ENCODE measurements at regions of chr15 and their contacts with region 1.

Region 1: GRCh38 chr15:31365655-31366127 is 39.1 kb downstream of the KLF13 start:
- DNase-seq: peak; percentile 78
- H3K4me3 ChIP-seq: no peak overlapping the region
- H3K27ac ChIP-seq: 0 out of 4 replicates have a peak overlapping the region, but pooled peaks of 1 of the 2 experiments have one; percentile 30
- H3K4me1 ChIP-seq: peaks cover 0 to 65% of the 10 kb centered on the region in 2 experiments; a peak in 2 of 4 replicates
- H3K27me3 ChIP-seq: no peaks in the 10 kb centered on the region
- CTCF ChIP-seq: no peak
- EP300 ChIP-seq: no peak
- RAD21 ChIP-seq: peak; percentile 41

Region 2: DNA sequence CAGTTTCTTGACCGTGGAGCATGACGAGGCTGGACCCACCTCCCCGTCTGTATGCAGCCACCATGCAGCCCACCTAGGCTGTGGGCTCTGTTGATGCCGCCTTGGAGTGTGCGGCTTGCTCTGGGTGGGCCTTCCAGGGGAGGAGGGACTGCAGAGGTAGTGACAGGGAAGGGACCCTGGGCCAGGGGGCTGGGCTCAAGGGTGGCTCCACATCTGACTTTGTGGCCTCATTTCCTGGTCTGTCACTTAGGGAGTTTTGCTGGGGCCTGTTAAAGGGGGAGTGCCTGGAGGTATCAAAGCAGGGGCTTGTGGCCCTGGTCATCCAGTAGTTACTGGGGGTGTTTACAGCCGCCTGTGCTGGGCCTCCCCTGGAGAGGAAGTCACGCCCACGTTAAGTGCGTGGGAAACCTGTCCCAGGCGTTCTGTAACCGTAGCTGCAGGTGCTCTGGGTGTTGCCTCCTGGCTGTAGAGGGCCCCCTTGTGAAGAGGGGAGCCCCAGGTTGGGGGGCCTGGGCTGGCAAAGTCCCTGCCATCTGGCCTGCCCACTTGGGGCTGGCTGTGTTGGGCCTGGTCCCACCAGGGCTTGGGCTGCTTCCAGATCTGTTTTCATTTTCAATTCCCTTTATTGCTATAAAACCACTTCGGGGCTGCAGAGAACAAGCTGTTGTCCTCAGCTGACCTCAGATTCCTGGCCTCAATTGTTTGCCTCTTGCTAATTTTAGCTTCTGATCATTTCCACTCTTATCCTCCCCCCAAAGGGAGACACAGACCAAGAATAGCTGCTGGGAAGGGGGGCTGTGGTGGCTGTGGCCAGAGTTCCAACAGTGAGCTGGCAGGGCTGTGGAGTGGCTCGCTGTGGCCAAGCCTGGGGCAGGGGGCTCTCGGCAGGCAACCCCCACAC is 12.5 kb before region 1 on chr15:
- CTCF ChIA-PET with region 1: interaction called, 23 read pairs
- POLR2A ChIA-PET with region 1: interaction called, 4 read pairs
- DNase-seq: peak; percentile 81
- H3K4me3 ChIP-seq: peak overlapping the region in 1 of 2 experiments; percentile 43; a peak in 2 of 4 replicates
- H3K27ac ChIP-seq: peak overlapping the region; percentile 94 to 95
- H3K4me1 ChIP-seq: peaks cover 24 to 90% of the 10 kb centered on the region in 2 experiments
- H3K27me3 ChIP-seq: no peaks in the 10 kb centered on the region
- CTCF ChIP-seq: no peak
- EP300 ChIP-seq: peak; percentile 70 to 91; a peak in 3 of 4 replicates
- RAD21 ChIP-seq: peak; percentile 40

Region 3: DNA sequence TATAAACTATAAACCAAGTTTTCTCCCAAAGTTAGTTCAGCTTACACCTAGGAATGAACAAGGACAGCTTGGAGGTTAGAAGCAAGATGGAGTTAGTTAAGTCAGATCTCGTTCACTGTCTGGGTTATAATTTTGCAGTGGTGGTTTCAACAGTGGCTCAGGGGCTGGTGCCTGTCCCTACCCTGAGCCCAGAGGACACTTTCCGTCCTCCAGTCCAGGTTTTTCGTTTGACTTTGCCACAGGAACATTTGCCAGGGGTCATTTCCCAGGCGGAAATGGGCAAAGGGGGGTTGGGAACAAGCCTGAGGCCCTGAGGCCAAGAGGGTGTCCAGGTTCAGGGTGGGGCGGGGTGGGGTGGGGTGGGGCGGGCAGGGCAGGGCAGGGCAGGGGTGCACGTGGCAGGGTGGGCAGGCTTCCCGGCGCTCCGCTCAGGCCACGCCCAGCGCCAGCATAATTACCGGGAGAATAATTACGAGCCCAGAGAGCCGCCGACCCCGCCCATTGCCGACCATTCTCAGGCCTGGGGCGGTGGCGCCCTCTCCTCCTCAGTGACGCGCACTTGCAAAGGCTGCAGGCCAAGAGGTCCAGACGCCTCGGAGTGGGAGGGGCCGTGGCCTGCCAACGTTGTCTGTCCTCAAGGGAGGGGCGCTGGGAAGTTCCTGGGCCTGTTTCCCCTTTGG is 31.3 kb after region 1 on chr15:
- CTCF ChIA-PET with region 1: interaction called, 12 read pairs
- POLR2A ChIA-PET with region 1: no interaction called
- DNase-seq: peak; percentile 82
- H3K4me3 ChIP-seq: peak overlapping the region in 1 of 2 experiments; percentile 25; a peak in 2 of 4 replicates
- H3K27ac ChIP-seq: peak overlapping the region in 1 of 2 experiments; percentile 98; a peak in 3 of 4 replicates
- H3K4me1 ChIP-seq: peaks cover 3 to 54% of the 10 kb centered on the region in 2 experiments; a peak in 2 of 4 replicates
- H3K27me3 ChIP-seq: no peaks in the 10 kb centered on the region
- CTCF ChIP-seq: no peak
- EP300 ChIP-seq: 0 out of 4 replicates have a peak, but pooled peaks of 1 of the 2 experiments have one; percentile 1
- RAD21 ChIP-seq: peak; percentile 48

Region 4: GRCh38 chr15:31446546-31446945 is 80.9 kb after region 1 on chr15:
- CTCF ChIA-PET with region 1: no interaction called
- POLR2A ChIA-PET with region 1: no interaction called
- DNase-seq: no peak
- H3K4me3 ChIP-seq: no peak overlapping the region
- H3K27ac ChIP-seq: no peak overlapping the region
- H3K4me1 ChIP-seq: peaks cover 4 to 7% of the 10 kb centered on the region in 2 experiments; a peak in 2 of 4 replicates
- H3K27me3 ChIP-seq: no peaks in the 10 kb centered on the region
- CTCF ChIP-seq: no peak
- EP300 ChIP-seq: no peak
- RAD21 ChIP-seq: no peak

Region 5: DNA sequence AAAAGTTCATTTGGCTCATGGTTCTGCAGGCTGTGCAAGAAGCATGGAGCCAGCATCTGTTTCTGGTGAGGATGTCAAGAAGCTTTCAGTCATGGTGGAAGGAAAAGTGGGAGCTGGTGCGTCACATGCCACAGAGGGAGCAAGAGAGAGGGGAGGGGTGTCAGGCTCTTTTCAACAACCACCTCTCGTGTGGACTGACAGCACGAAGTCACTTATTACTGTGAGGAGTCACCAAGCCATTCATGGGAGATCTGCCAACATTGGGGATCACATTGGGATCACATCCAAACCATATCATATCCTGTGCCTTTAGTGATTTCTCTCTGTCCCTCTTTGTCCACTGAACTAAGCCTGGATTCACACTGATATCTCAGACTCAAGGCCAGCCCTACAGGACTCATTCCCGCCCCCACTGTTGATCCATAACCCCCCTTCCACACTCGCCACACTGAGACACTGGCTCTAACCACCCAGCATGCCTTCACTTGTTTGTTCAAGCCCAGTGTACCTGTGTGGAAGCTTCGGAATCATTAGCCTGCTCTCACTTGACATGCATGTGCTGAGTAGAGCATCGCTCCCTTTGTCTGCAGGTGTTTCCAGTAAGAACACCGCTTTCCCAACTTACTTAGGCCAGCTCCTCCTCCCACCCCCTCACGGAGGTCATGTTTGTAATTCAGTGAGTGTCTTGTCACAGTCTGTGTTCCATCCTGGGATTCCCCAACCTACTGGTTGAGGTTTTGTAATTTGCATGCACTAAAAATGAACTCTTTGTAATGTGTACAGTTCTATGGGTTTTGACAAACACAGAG is 93.1 kb after region 1 on chr15:
- CTCF ChIA-PET with region 1: no interaction called
- POLR2A ChIA-PET with region 1: no interaction called
- DNase-seq: no peak
- H3K4me3 ChIP-seq: no peak overlapping the region
- H3K27ac ChIP-seq: no peak overlapping the region
- H3K4me1 ChIP-seq: no peaks in the 10 kb centered on the region
- H3K27me3 ChIP-seq: no peaks in the 10 kb centered on the region
- CTCF ChIP-seq: no peak
- EP300 ChIP-seq: no peak
- RAD21 ChIP-seq: no peak

Measured in SK-N-SH (cell line).